Activated naive CD4-positive, alpha-beta T cell treated with anti-CD3 and anti-CD28 coated beads for 36 hours (primary cell): ENCODE measurements at regions of chr19 and their contacts with region 1.

Region 1: GRCh38 chr19:36915992-36916830 is at the starts of genes ZNF568 and ZNF829:
- DNase-seq: peak; percentile 96
- H3K4me3 Mint-ChIP-seq: peak within 1 kb of the TSS; percentile 87
- H3K27ac Mint-ChIP-seq: peak within 1 kb of the TSS; percentile 91
- H3K4me1 Mint-ChIP-seq: peaks cover 17% of the 10 kb centered on the region
- H3K27me3 Mint-ChIP-seq: no peaks in the 10 kb centered on the region
- total RNA-seq, gene ZNF568: 5.3 to 6.3 TPM
- total RNA-seq, gene ZNF829: 3.5 to 3.7 TPM

Region 2: GRCh38 chr19:36753305-36753704 is 162.9 kb before region 1 on chr19:
- CTCF ChIA-PET with region 1: no interaction called
- intact Hi-C with region 1: no loop called
- DNase-seq: no peak
- H3K4me3 Mint-ChIP-seq: no peak overlapping the region
- H3K27ac Mint-ChIP-seq: no peak overlapping the region
- H3K4me1 Mint-ChIP-seq: no peaks in the 10 kb centered on the region
- H3K27me3 Mint-ChIP-seq: no peaks in the 10 kb centered on the region

Region 3: DNA sequence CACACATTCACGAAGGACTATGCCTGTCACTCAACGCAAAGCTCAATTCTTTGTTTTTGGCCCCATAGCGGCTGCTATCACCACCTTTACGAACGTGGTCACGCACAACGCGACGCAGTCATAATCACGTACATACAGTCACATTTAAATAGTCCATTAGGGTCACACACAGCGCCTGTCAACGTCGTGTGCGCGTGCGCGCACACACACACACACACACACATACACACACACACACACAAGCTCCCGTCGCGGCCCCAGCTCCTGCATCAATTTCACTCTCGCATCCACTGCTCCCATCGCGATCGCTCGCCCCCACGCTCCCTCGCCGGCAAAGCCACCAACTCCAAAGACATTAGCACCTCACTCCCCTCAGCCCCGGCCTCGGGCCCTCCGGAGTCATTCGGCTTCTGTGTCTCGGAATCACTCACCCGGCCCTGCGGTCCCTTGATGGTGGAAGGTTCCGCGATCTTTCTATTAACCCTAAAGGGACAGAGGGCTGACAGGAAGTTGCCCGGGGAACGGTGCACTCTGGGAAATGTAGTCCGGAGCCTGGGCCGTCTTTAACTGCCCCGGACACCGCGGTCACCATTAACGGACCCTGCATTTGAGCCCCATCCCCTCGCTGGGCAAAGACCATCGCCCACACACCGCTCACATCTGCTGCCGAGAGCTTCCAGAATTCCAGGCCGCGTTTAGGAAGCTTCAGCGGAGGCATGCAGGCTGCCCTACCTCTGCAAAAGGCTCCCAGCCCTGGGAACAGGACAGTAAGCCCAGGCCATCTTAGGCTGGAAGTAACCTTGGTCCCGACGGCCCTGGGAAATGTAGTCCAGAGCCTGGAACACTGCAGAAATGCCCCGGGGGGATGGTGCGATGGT is 78.1 kb before region 1 on chr19 and contains the start of gene ZNF790:
- CTCF ChIA-PET with region 1: no interaction called
- intact Hi-C with region 1: loop called (anchors 2 kb)
- DNase-seq: peak; percentile 92
- H3K4me3 Mint-ChIP-seq: no peak within 1 kb of the TSS
- H3K27ac Mint-ChIP-seq: peak within 1 kb of the TSS; percentile 54
- H3K4me1 Mint-ChIP-seq: peaks cover 7% of the 10 kb centered on the region
- H3K27me3 Mint-ChIP-seq: no peaks in the 10 kb centered on the region
- total RNA-seq, gene ZNF790: 4.9 to 5.2 TPM

Region 4: GRCh38 chr19:37014456-37014855 is 98.2 kb after region 1 on chr19:
- CTCF ChIA-PET with region 1: no interaction called
- intact Hi-C with region 1: no loop called
- DNase-seq: no peak
- H3K4me3 Mint-ChIP-seq: no peak overlapping the region
- H3K27ac Mint-ChIP-seq: no peak overlapping the region
- H3K4me1 Mint-ChIP-seq: no peaks in the 10 kb centered on the region
- H3K27me3 Mint-ChIP-seq: no peaks in the 10 kb centered on the region

Region 5: DNA sequence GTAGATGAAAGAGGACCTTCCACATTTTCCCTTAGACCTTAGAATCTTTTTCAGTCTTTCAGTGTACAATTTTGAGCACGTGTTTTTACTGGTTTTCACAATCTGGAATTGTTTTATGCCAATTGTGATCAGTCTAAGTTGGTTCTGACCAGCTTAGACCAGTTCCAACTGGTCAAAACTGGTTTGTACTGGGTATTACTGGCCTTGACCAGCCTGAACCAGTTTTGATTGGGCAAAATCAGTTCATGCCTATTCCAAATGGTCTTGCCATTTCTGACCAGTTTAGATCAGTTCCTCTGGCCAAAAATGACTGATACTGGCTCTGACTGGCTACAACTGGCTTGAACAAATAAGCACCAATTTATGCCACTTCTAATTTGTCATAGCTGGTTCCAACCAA is 219.9 kb after region 1 on chr19:
- CTCF ChIA-PET with region 1: no interaction called
- intact Hi-C with region 1: no loop called
- DNase-seq: no peak
- H3K4me3 Mint-ChIP-seq: no peak overlapping the region
- H3K27ac Mint-ChIP-seq: no peak overlapping the region
- H3K4me1 Mint-ChIP-seq: no peaks in the 10 kb centered on the region
- H3K27me3 Mint-ChIP-seq: no peaks in the 10 kb centered on the region

Region 6: DNA sequence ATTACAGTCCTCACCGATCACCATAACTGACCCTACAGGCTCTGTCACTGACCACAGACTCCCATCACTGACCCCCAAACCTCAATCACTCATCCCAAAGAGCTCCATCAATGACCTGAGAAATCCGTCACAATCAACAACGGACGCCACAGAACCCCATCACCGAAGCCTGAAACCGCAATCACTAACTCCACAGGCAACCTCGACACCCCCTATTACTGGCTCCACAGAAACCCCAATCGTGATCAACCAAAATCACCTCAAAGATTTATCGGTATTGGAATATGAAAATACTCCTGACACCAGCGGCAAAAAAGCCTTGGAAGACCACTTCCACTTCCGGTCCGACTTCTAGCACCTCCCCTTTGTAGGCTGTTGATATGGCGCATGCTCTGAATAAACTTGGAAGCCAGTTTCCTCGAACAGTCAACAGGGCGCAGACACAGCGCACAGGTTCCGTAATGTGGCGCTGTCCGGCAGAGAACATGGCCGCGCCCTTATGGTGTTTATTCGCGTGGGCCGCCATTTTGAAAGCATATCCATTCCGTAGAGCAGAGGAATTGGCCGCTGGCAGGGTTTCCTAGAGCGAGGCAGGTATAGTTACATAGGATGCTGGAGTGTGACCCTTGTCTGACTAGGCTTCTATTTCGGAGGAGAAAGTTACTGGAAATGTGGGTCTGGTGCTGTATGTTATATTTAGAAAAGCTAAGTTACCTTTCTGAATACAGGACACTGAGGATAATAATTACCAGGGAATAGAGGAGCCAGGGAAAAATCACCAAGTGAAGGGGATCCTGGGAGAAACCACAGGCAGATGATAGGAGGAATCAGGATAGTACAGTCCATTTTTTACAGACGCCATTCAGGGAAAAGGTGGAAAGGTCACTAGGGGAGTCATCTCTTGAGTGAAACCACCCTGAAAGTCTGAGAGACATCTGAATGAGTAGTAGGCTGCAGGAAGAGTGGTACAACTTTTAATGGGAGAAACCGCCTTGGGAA is 256.5 kb after region 1 on chr19 and contains the start of gene ZNF585A:
- CTCF ChIA-PET with region 1: no interaction called
- intact Hi-C with region 1: loop called (anchors 1 kb)
- DNase-seq: peak; percentile 92
- H3K4me3 Mint-ChIP-seq: no peak within 1 kb of the TSS
- H3K27ac Mint-ChIP-seq: no peak within 1 kb of the TSS
- H3K4me1 Mint-ChIP-seq: no peaks in the 10 kb centered on the region
- H3K27me3 Mint-ChIP-seq: no peaks in the 10 kb centered on the region
- total RNA-seq, gene ZNF585A: 8.9 to 9.1 TPM